CD14-positive monocyte (primary cell): ENCODE measurements at regions of chr12 and their contacts with region 1.

Region 1: DNA sequence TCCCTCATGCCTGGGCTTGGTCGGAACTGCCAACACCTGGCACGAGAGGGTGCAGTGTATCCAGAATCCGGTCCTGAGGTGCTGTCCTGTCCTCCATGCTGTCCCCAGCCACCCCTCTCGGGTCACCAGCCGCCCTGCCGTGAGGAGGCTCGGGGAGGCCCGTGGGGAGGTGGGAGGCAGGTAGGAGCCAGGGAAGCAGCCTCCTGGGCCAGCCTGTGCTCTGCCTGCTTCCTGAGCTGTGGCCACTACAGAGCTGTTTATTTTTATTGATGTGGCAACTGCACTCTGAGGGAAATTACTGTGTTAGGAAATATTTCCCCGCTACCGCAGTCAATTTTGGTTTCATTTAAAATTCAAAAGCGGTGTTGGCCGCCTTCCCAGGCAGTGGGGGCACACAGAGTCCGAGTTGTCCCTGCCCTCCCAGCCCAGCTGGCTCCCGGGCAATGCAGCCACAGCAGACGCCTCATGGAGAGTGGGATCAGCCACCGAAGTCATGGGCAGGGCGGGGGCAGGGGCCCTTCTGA is 18.3 kb downstream of the NOC4L start:
- DNase-seq: peak; percentile 32 to 70 (median 64)
- H3K4me3 ChIP-seq: peak overlapping the region; percentile 22 to 69 (median 47)
- H3K4me3 Mint-ChIP-seq: peak overlapping the region; percentile 71 to 82
- H3K27ac ChIP-seq: peak overlapping the region; percentile 42 to 55
- H3K27ac Mint-ChIP-seq: peak overlapping the region in 6 of 7 donors; percentile 31 to 87 (median 70)
- H3K4me1 ChIP-seq: peaks cover 19 to 21% of the 10 kb centered on the region in 2 donors
- H3K4me1 Mint-ChIP-seq: peaks cover 19% of the 10 kb centered on the region
- H3K27me3 ChIP-seq: no peaks in the 10 kb centered on the region
- H3K27me3 Mint-ChIP-seq: peaks cover 7 to 14% (median 12%) of the 10 kb centered on the region in 3 donors
- CTCF ChIP-seq: no peak

Region 2: DNA sequence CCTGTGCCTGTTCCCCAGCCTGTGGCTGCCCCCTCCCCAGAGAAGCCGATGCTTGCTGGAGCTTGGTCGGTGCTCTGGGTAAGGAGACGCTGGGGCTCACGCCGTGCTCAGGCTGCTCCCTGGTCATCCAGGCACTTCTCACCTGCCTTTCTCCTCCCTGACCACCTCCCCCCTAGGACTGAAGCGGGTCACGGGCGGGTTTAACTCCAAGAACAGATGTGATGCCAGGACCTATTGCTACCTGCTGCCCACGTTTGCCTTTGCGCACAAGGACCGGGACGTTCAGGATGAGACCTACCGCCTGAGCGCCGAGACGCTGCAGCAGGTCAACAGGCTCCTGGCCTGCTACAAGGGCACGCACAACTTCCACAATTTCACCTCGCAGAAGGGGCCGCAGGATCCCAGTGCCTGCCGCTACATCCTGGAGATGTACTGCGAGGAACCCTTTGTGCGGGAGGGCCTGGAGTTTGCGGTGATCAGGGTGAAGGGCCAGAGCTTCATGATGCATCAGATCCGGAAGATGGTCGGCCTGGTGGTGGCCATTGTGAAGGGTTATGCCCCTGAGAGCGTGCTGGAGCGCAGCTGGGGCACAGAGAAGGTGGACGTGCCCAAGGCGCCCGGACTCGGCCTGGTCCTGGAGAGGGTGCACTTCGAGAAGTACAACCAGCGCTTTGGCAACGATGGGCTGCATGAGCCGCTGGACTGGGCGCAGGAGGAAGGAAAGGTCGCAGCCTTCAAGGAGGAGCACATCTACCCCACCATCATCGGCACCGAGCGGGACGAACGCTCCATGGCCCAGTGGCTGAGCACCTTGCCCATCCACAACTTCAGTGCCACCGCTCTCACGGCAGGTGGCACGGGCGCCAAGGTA is 221.2 kb before region 1 on chr12:
- intact Hi-C with region 1: no loop called
- DNase-seq: no peak
- H3K4me3 ChIP-seq: no peak overlapping the region
- H3K4me3 Mint-ChIP-seq: no peak overlapping the region
- H3K27ac ChIP-seq: no peak overlapping the region
- H3K27ac Mint-ChIP-seq: peak overlapping the region in 1 of 7 donors; percentile 50
- H3K4me1 ChIP-seq: no peaks in the 10 kb centered on the region
- H3K4me1 Mint-ChIP-seq: no peaks in the 10 kb centered on the region
- H3K27me3 ChIP-seq: no peaks in the 10 kb centered on the region
- H3K27me3 Mint-ChIP-seq: peaks cover 0 to 2% (median 0%) of the 10 kb centered on the region in 3 donors
- CTCF ChIP-seq: no peak

Region 3: GRCh38 chr12:132218915-132219314 is 56.3 kb after region 1 on chr12:
- intact Hi-C with region 1: loop called in 1 of 2 experiments (anchors 5 kb)
- DNase-seq: peak in 1 of 3 donors; percentile 20
- H3K4me3 ChIP-seq: no peak overlapping the region
- H3K4me3 Mint-ChIP-seq: no peak overlapping the region
- H3K27ac ChIP-seq: no peak overlapping the region
- H3K27ac Mint-ChIP-seq: no peak overlapping the region
- H3K4me1 ChIP-seq: peaks cover 0 to 4% of the 10 kb centered on the region in 2 donors
- H3K4me1 Mint-ChIP-seq: peaks cover 5% of the 10 kb centered on the region
- H3K27me3 ChIP-seq: no peaks in the 10 kb centered on the region
- H3K27me3 Mint-ChIP-seq: peaks cover 12 to 19% (median 12%) of the 10 kb centered on the region in 3 donors
- CTCF ChIP-seq: peak; percentile 18

Region 4: DNA sequence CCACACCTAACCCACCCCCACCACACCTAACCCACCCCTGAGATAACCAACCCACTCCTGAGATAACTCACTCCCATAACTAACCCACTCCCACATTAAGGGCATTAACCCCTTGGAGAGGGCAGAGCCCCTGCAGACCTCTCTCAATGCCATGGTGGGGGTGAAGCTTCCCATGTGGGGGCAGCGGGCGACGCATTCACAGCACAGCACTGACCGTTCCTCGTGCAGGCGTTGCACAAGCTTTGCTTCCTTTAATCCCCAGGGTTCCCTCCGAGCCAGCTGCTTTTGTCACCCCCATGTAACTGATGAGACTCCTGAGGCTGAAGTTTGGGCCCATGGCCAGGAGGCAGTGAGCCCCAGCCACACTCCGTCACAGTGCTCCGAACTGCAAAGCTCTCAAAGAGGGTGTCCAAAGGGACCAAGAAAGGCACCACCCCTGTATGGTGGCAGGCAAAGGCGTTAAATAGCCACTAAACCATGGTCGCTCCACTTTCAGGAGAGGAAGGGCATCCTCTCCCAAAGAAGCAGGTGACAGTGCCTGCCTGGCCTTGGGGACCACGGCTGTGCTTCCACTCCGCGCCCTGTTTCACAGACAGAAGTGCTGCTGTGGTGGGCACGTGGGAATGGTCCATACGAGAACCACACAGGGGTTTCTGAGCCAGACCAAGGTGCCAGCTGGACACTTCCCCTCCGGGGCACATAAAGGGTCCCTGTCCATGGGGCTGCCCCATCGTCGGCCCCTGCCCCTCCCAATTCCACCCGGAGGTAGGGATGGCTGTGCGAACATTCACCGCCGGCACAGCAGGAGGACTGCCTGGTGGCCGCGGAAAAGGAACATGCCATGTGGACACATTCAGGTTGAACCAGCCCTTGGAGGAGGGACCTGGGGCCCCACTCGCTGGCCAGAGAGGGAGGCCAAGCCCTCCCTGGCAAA is 138.5 kb after region 1 on chr12:
- intact Hi-C with region 1: no loop called
- DNase-seq: no peak
- H3K4me3 ChIP-seq: no peak overlapping the region
- H3K4me3 Mint-ChIP-seq: no peak overlapping the region
- H3K27ac ChIP-seq: no peak overlapping the region
- H3K27ac Mint-ChIP-seq: no peak overlapping the region
- H3K4me1 ChIP-seq: no peaks in the 10 kb centered on the region
- H3K4me1 Mint-ChIP-seq: no peaks in the 10 kb centered on the region
- H3K27me3 ChIP-seq: no peaks in the 10 kb centered on the region
- H3K27me3 Mint-ChIP-seq: peaks cover 0 to 5% (median 2%) of the 10 kb centered on the region in 3 donors
- CTCF ChIP-seq: no peak

Region 5: DNA sequence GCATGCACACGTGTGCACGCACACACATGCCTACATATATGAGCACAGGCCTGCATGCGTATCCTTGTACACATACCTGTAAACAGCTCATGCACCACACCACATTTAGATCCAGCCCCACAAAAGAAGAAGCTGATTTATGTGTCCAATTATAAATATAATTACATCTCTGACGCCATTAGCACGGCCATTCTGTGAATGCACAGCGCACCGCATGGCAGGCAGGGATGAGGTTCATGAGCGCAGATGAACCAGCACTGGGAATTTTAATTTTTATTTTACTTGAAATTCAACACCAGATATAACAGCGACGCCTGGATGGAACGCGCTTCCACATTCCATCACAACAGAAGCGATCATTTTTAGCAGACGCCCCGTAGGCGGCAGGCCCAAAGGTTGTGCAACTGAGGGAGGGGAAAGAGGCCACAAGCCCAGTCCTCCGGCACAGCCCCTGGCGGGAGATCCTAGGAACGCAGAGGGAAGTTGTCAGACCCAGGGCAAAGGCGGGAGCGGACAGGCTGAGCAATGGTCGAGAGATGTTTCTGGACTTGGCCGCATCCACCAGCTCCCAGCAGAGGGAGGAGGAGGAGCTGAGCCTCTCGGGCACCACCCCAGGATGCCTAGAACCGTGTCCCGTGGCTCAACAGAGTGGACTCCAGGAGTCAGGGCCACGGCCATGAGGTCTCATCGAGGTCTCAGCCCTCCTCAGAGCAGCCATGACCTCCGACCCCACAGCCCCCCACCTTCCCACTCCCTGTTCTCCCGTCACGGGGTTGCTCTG is 204.7 kb after region 1 on chr12:
- intact Hi-C with region 1: no loop called
- DNase-seq: no peak
- H3K4me3 ChIP-seq: no peak overlapping the region
- H3K4me3 Mint-ChIP-seq: no peak overlapping the region
- H3K27ac ChIP-seq: no peak overlapping the region
- H3K27ac Mint-ChIP-seq: no peak overlapping the region
- H3K4me1 ChIP-seq: no peaks in the 10 kb centered on the region
- H3K4me1 Mint-ChIP-seq: no peaks in the 10 kb centered on the region
- H3K27me3 ChIP-seq: peaks cover 0 to 6% of the 10 kb centered on the region in 2 donors
- H3K27me3 Mint-ChIP-seq: peaks cover 6 to 24% (median 15%) of the 10 kb centered on the region in 3 donors
- CTCF ChIP-seq: no peak